ENCODE measurements at regions of chr13 and their contacts with region 1.

Region 1: GRCh38 chr13:35984776-35985453 is 146.3 kb downstream of the DCLK1 start:
- DNase-seq: no peak
- ATAC-seq: no peak
- H3K4me3 ChIP-seq: no peak overlapping the region
- H3K27ac ChIP-seq: no peak overlapping the region
- H3K4me1 ChIP-seq: peaks cover 0 to 3% of the 10 kb centered on the region in 2 experiments; a peak in 1 of 5 replicates
- H3K27me3 ChIP-seq: 0 out of 5 replicates have a peak, but pooled peaks cover 0 to 4% of the 10 kb centered on the region in 2 experiments
- CTCF ChIP-seq: no peak
- EP300 ChIP-seq: no peak
- POLR2A ChIP-seq: no peak
- RAD21 ChIP-seq: no peak

Region 2: DNA sequence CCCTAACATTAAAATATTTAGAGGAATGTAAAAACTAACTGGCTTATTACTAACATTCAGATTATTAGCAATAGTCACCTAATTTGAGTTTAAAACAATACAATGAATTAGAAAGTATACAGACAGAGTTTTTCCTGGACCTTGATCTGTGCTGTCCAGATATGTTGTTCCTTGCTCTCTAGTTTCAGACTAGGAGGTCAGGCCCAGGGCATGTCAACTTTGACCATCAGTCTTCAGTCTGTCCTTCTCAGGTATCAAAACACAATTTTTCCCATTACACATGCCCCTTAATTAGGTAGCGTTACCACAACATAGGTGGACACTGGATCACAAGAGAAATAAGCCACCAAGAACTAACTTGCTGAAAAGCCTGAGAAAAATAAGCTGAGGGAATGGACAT is 705.4 kb before region 1 on chr13:
- CTCF ChIA-PET with region 1: no interaction called
- POLR2A ChIA-PET with region 1: no interaction called
- in situ Hi-C with region 1: no loop called
- intact Hi-C with region 1: no loop called
- DNase-seq: no peak
- ATAC-seq: no peak
- H3K4me3 ChIP-seq: no peak overlapping the region
- H3K27ac ChIP-seq: no peak overlapping the region
- H3K4me1 ChIP-seq: no peaks in the 10 kb centered on the region
- H3K27me3 ChIP-seq: no peaks in the 10 kb centered on the region
- CTCF ChIP-seq: no peak
- EP300 ChIP-seq: no peak
- POLR2A ChIP-seq: no peak
- RAD21 ChIP-seq: no peak

Region 3: GRCh38 chr13:36275190-36276002 is 290.5 kb after region 1 on chr13:
- CTCF ChIA-PET with region 1: no interaction called
- POLR2A ChIA-PET with region 1: no interaction called
- in situ Hi-C with region 1: loop called (anchors 5 kb)
- intact Hi-C with region 1: no loop called
- DNase-seq: peak in 1 of 4 experiments; percentile 27
- ATAC-seq: no peak; the same call in 2 of the 3 replicates
- H3K4me3 ChIP-seq: no peak overlapping the region
- H3K27ac ChIP-seq: no peak overlapping the region
- H3K4me1 ChIP-seq: no peaks in the 10 kb centered on the region
- H3K27me3 ChIP-seq: no peaks in the 10 kb centered on the region
- CTCF ChIP-seq: peak in 2 of 3 experiments; percentile 22 to 53; a peak in 2 of 6 replicates
- EP300 ChIP-seq: no peak
- POLR2A ChIP-seq: no peak
- RAD21 ChIP-seq: peak; percentile 25 to 57; a peak in 3 of 4 replicates